MCF 10A (cell line): ENCODE measurements at regions of chr18 and their contacts with region 1.

Region 1: GRCh38 chr18:7272311-7273049 is 41.6 kb downstream of the LRRC30 start:
- DNase-seq: peak; percentile 83
- H3K4me3 Mint-ChIP-seq: no peak overlapping the region
- H3K27ac Mint-ChIP-seq: peak overlapping the region; percentile 80
- H3K4me1 Mint-ChIP-seq: peaks cover 14% of the 10 kb centered on the region
- H3K27me3 Mint-ChIP-seq: no peaks in the 10 kb centered on the region
- CTCF ChIP-seq: peak; percentile 61

Region 2: DNA sequence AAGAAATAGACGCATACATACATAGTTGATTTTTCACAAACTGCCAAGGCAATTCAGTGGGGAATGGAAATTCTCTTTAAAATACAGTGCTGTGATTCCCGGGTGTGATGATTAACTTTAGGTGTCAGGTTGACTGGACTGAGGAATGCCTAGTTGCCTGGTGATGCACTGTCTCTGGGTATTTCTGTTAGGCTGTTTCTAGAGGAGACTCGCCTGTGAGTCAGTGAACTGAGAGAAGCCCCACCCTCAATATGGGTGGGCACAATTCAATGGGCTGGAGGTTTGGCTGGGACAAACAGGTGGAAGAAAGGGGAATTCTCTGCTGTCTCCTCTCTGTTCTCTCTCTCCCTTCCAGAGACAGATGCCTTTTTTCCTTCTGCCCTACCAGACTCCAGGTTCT is 355.4 kb before region 1 on chr18:
- CTCF ChIA-PET with region 1: no interaction called
- POLR2A ChIA-PET with region 1: no interaction called
- intact Hi-C with region 1: no loop called
- DNase-seq: peak; percentile 11
- H3K4me3 Mint-ChIP-seq: no peak overlapping the region
- H3K27ac Mint-ChIP-seq: no peak overlapping the region
- H3K4me1 Mint-ChIP-seq: peaks cover 6% of the 10 kb centered on the region
- H3K27me3 Mint-ChIP-seq: no peaks in the 10 kb centered on the region
- CTCF ChIP-seq: no peak

Region 3: DNA sequence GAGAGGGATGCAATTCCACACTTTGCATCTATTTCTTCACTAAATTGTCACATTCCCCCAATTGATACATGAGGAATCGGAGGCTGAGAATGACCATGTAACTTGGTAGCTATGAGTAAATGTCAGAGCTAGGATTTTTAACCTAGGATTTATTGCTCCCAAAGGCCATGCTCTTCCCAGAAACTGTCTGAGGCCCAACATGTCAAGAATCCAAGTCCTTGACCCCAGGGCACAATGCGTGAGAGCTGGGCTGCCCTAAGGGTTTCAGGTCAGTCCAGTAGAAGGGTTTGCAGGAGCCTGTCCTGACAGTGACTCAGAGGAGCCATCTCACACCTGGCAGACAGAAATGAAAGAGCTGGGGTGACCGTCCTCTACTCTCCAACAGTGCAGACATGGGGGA is 11.3 kb before region 1 on chr18:
- CTCF ChIA-PET with region 1: interaction called, 40 read pairs
- POLR2A ChIA-PET with region 1: no interaction called
- intact Hi-C with region 1: no loop called
- DNase-seq: no peak
- H3K4me3 Mint-ChIP-seq: no peak overlapping the region
- H3K27ac Mint-ChIP-seq: no peak overlapping the region
- H3K4me1 Mint-ChIP-seq: no peaks in the 10 kb centered on the region
- H3K27me3 Mint-ChIP-seq: no peaks in the 10 kb centered on the region
- CTCF ChIP-seq: no peak

Region 4: GRCh38 chr18:7349181-7349837 is 76.8 kb after region 1 on chr18:
- CTCF ChIA-PET with region 1: no interaction called
- POLR2A ChIA-PET with region 1: no interaction called
- intact Hi-C with region 1: loop called (anchors 1 kb)
- DNase-seq: peak; percentile 23
- H3K4me3 Mint-ChIP-seq: no peak overlapping the region
- H3K27ac Mint-ChIP-seq: no peak overlapping the region
- H3K4me1 Mint-ChIP-seq: no peaks in the 10 kb centered on the region
- H3K27me3 Mint-ChIP-seq: no peaks in the 10 kb centered on the region
- CTCF ChIP-seq: no peak

Region 5: GRCh38 chr18:7626922-7627440 is 354.5 kb after region 1 on chr18:
- CTCF ChIA-PET with region 1: interaction called, 5 read pairs
- POLR2A ChIA-PET with region 1: no interaction called
- intact Hi-C with region 1: loop called (anchors 2 kb)
- DNase-seq: peak; percentile 85
- H3K4me3 Mint-ChIP-seq: no peak overlapping the region
- H3K27ac Mint-ChIP-seq: peak overlapping the region; percentile 41
- H3K4me1 Mint-ChIP-seq: peaks cover 41% of the 10 kb centered on the region
- H3K27me3 Mint-ChIP-seq: no peaks in the 10 kb centered on the region
- CTCF ChIP-seq: no peak

Region 6: GRCh38 chr18:7872569-7872968 is 600.1 kb after region 1 on chr18:
- CTCF ChIA-PET with region 1: interaction called, 10 read pairs
- POLR2A ChIA-PET with region 1: interaction called, 3 read pairs
- intact Hi-C with region 1: loop called (anchors 5 kb)
- DNase-seq: peak; percentile 89
- H3K4me3 Mint-ChIP-seq: peak overlapping the region; percentile 62
- H3K27ac Mint-ChIP-seq: peak overlapping the region; percentile 96
- H3K4me1 Mint-ChIP-seq: peaks cover 38% of the 10 kb centered on the region
- H3K27me3 Mint-ChIP-seq: no peaks in the 10 kb centered on the region
- CTCF ChIP-seq: peak; percentile 15

Region 7: GRCh38 chr18:7918696-7919095 is 646.2 kb after region 1 on chr18:
- CTCF ChIA-PET with region 1: no interaction called
- POLR2A ChIA-PET with region 1: no interaction called
- intact Hi-C with region 1: no loop called
- DNase-seq: no peak
- H3K4me3 Mint-ChIP-seq: no peak overlapping the region
- H3K27ac Mint-ChIP-seq: peak overlapping the region; percentile 96
- H3K4me1 Mint-ChIP-seq: peaks cover 68% of the 10 kb centered on the region
- H3K27me3 Mint-ChIP-seq: no peaks in the 10 kb centered on the region
- CTCF ChIP-seq: no peak

Region 8: DNA sequence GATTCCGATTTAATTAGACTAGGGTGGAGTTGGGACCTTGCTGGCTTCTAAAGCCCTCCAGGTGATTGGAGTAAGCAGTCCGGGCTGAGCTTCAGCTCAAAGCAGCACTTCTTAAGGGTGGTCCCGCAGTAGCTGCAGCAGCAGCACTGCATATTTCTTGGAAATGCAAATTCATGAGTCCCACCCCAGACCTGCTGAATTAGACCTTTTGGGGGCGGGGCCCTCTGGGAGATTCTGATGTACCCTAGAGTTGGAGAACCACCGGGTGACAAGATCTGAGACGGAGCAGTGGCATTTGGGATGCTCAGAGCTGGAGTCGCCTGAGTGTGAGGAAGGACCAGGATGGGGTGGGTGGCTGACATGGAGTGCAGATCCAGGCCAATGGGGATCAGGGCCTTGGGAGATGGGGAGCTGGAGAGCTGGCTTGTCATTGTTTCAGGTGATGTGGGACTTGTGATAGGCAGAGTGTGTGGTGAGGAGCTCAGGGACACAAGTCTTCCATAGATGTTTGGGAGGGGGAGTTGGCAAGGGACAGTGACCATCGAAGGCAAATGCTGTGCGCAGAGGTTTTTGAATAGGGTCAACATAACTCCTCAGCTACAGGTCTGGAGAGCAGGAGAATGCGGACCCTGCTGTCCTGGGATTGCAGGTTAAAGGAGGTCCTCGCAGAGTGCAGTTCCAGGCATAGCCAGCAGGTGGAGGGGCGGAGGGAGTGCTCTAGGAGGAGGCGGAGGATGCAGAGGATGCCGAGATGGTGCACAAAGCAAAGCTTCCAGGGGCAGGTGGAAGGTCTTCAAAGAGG is 1205.9 kb after region 1 on chr18:
- CTCF ChIA-PET with region 1: interaction called, 24 read pairs
- POLR2A ChIA-PET with region 1: no interaction called
- intact Hi-C with region 1: no loop called
- DNase-seq: peak; percentile 64
- H3K4me3 Mint-ChIP-seq: no peak overlapping the region
- H3K27ac Mint-ChIP-seq: no peak overlapping the region
- H3K4me1 Mint-ChIP-seq: peaks cover 5% of the 10 kb centered on the region
- H3K27me3 Mint-ChIP-seq: peaks cover 45% of the 10 kb centered on the region
- CTCF ChIP-seq: peak; percentile 76